Heart right ventricle (tissue), 16 donors: ENCODE measurements at regions of chr1 and their contacts with region 1.

Region 1: DNA sequence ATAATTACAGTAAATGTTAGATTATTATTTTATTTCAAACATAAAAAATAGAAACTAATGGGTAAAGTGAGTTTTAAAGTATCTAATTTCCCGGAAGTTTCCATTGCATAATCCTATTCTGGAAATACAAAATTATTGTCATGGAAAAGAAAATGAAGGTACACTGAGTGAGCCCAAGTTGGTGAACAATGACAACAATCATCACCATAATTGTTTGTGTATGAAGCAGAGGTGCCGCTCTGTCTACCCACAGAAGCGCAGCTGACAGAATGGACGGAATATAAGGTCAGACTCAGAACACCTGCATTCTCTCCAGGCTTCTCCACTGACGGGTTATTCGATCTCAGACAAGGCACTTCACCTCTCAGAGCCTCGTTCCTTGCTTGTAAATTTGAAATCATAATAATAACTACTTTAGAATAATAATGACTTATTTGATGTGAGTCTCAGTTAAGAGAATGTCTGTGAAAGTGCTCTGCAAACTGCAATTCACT is 99.1 kb upstream of the NGF start:
- DNase-seq: no peak
- ATAC-seq: no peak
- H3K4me3 ChIP-seq: no peak overlapping the region
- H3K27ac ChIP-seq: no peak overlapping the region
- H3K4me1 ChIP-seq: peaks cover 0 to 14% (median 0%) of the 10 kb centered on the region in 9 donors
- H3K27me3 ChIP-seq: no peaks in the 10 kb centered on the region
- CTCF ChIP-seq: no peak

Region 2: GRCh38 chr1:115118611-115119010 is 318.6 kb before region 1 on chr1:
- intact Hi-C with region 1: no loop called
- DNase-seq: no peak
- ATAC-seq: no peak
- H3K4me3 ChIP-seq: no peak overlapping the region
- H3K27ac ChIP-seq: no peak overlapping the region
- H3K4me1 ChIP-seq: peaks cover 0 to 3% (median 0%) of the 10 kb centered on the region in 9 donors
- H3K27me3 ChIP-seq: no peaks in the 10 kb centered on the region
- CTCF ChIP-seq: no peak

Region 3: DNA sequence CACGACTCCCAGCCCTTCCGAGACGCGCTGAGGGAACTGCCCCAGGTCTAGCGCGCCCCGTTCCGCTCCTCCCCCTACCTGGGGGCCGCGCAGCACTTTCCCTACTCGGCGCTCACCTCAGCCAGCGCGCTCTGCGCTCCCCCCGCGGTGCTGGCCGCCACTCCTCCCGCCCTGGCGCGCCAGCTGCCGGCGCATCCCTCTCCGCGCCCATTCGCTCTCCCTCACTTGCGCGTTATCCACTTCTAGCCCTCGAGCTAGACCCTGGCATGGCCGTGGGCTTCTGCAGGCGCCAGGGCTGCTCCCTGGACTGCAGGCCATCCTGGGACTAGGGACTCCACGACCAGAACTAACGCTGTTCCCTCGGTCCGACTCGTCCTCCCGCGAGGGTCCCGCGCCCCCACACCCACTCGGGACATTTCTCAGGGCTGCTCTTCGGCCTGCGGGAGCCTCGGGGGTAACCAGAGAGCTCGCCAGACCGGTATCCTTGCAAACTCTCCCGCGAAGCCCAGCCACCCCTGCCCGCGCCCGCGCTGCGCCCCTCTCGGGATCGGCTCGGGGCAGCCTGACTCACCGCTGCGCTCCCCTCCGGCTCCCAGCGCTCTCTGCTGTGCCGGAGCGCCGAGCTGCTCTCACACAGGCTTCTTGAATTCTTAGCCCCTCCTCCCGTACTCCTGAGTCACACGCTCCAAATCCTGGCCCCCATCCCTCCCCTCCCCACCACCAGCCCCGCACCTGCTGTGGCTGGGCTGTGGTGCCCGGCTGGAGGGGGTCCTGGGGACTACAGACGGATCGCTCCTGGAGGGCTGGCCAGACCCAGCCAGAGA is 99.3 kb before region 1 on chr1 and contains the start of gene NGF:
- intact Hi-C with region 1: loop called in 1 of 10 experiments (anchors 5 kb)
- DNase-seq: peak; percentile 60 to 64
- ATAC-seq: peak; percentile 81 to 91 (median 86)
- H3K4me3 ChIP-seq: peak within 1 kb of the TSS; percentile 39 to 87 (median 68)
- H3K27ac ChIP-seq: peak within 1 kb of the TSS; percentile 33 to 89 (median 82)
- H3K4me1 ChIP-seq: peaks cover 12 to 76% (median 28%) of the 10 kb centered on the region in 9 donors
- H3K27me3 ChIP-seq: peaks cover 0 to 33% (median 7%) of the 10 kb centered on the region in 7 donors
- CTCF ChIP-seq: no peak
- total RNA-seq, gene NGF: 1.8 to 5.3 (median 2.9) TPM